ENCODE measurements at regions of chr2 and their contacts with region 1.

Region 1: GRCh38 chr2:68751397-68752339 is 17.1 kb downstream of the ARHGAP25 start:
- DNase-seq: peak; percentile 95
- ATAC-seq: peak; percentile 92
- H3K4me3 Mint-ChIP-seq: peak overlapping the region; percentile 27
- H3K27ac Mint-ChIP-seq: peak overlapping the region; percentile 77
- H3K4me1 Mint-ChIP-seq: peaks cover 88% of the 10 kb centered on the region
- H3K27me3 Mint-ChIP-seq: no peaks in the 10 kb centered on the region

Region 2: DNA sequence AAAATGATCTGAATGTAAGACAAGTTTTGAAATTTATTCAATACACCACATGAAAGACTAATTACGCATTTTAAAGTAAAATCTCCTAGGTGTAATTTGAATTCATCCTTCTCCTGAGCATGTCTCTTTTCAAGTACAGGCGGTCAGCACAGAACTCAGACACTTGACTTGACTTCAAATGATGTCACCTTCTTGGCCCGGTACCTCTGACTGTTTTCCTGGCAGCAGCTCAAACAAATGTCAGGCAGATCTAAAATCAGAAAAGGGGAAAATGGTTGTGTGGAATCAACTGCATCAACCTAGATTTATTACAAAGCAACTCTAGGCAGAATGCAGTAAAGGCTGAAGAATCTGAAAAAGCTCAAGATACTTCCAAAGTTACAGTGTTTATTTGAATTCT is 119.6 kb before region 1 on chr2:
- CTCF ChIA-PET with region 1: no interaction called
- DNase-seq: no peak
- ATAC-seq: no peak
- H3K4me3 Mint-ChIP-seq: no peak overlapping the region
- H3K27ac Mint-ChIP-seq: no peak overlapping the region
- H3K4me1 Mint-ChIP-seq: no peaks in the 10 kb centered on the region
- H3K27me3 Mint-ChIP-seq: peaks cover 38% of the 10 kb centered on the region

Region 3: DNA sequence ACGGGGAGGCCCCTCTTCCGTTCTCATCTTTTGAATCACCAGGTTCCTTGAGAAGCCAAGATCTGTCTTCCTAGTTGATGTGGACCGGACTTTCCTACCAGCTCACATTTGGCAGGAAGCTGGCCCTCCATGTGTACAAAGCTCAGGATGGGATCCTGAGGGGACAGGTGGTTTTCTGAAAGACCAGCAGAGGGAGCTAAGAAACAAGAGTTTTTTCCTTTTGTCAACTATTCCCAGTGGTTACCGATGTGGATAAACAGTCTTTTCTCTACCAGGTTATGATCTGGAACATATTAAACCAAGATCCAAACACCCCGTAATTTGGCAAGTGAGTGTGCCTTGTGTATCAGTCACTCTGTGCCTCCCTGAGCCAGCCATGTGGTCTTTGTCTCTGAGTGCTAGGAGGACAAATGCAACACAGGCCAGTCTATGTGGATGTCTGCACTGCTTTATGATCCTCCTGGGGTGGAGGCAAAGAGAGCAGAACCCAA is 42.2 kb before region 1 on chr2:
- CTCF ChIA-PET with region 1: interaction called, 16 read pairs
- DNase-seq: no peak
- ATAC-seq: peak; percentile 82
- H3K4me3 Mint-ChIP-seq: no peak overlapping the region
- H3K27ac Mint-ChIP-seq: peak overlapping the region; percentile 7
- H3K4me1 Mint-ChIP-seq: peaks cover 26% of the 10 kb centered on the region
- H3K27me3 Mint-ChIP-seq: peaks cover 2% of the 10 kb centered on the region

Region 4: DNA sequence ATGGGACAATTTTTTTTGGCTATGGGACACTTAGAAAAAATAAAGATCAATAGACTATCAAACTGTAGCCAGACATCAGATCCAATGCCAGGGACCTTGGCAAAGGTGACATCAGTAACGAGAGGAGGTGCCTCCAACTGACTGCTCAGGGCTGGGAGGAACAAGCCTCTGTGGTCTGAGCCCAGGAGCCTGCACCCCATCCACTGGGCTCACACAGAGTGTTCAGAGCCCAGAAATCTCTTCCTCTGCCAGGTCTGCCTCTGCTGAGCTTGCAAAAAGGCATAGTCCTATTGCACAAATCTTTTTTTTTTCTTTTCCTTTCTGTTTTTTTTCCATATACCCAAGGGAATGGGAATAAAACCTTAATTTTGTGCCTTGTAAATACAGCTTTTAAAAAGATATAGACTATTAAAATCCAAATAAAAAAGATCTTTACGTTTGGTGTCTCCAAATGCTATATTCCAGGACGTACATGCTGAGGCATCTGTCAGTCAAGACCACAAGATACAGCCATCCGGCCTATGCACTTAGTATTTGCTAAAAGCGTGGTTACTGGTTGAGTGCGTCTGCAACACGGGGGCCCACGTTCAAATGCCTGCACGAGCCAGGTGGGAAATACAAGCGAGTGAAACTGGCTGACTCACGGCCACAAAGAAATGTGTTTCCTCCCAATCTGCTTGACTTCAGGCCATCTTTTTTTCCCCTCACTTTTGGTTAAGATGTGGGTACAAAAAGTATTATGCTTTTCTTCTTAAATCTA is 24.9 kb before region 1 on chr2:
- CTCF ChIA-PET with region 1: interaction called, 22 read pairs
- DNase-seq: peak; percentile 95
- ATAC-seq: peak; percentile 97
- H3K4me3 Mint-ChIP-seq: peak overlapping the region; percentile 43
- H3K27ac Mint-ChIP-seq: peak overlapping the region; percentile 88
- H3K4me1 Mint-ChIP-seq: peaks cover 82% of the 10 kb centered on the region
- H3K27me3 Mint-ChIP-seq: no peaks in the 10 kb centered on the region

Region 5: GRCh38 chr2:68766376-68766845 is 14.7 kb after region 1 on chr2:
- CTCF ChIA-PET with region 1: interaction called, 93 read pairs
- DNase-seq: peak; percentile 89
- ATAC-seq: peak; percentile 71
- H3K4me3 Mint-ChIP-seq: peak overlapping the region; percentile 76
- H3K27ac Mint-ChIP-seq: peak overlapping the region; percentile 100
- H3K4me1 Mint-ChIP-seq: peaks cover 94% of the 10 kb centered on the region
- H3K27me3 Mint-ChIP-seq: no peaks in the 10 kb centered on the region

Region 6: DNA sequence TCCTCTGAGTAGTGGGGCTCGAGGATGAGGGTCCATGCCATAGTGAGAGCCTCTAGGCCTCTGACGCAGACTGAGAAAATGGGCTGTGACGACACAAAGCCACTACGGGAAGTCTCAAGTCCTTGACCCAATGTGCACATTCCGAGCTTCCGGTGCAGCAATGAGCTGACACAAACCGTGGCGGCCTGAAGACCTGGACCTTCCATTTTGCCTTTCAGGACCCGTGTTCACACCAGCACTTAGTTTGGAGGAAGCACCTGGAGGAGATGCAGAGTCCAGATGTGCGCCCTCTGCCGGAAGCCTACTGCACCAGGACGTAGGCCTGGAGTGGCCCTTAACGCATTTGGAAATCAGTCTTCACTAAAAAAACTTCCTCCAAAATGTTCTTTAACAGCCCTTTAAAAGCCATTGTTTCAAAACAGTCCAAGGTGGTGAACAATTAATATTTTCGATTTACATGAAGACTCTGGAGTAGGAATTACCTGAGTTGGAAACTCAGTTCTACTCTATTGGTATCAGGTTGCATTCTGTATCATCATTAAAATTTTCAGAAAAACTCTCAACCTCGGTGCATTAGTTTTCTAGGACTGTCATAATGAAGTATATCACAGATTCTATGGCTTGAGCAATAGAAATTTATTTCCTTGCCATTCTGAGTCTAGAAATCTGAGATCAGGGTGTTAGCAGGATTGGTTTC is 85.6 kb after region 1 on chr2:
- CTCF ChIA-PET with region 1: interaction called, 20 read pairs
- DNase-seq: peak; percentile 77
- ATAC-seq: peak; percentile 64
- H3K4me3 Mint-ChIP-seq: no peak overlapping the region
- H3K27ac Mint-ChIP-seq: peak overlapping the region; percentile 83
- H3K4me1 Mint-ChIP-seq: peaks cover 36% of the 10 kb centered on the region
- H3K27me3 Mint-ChIP-seq: no peaks in the 10 kb centered on the region

Region 7: DNA sequence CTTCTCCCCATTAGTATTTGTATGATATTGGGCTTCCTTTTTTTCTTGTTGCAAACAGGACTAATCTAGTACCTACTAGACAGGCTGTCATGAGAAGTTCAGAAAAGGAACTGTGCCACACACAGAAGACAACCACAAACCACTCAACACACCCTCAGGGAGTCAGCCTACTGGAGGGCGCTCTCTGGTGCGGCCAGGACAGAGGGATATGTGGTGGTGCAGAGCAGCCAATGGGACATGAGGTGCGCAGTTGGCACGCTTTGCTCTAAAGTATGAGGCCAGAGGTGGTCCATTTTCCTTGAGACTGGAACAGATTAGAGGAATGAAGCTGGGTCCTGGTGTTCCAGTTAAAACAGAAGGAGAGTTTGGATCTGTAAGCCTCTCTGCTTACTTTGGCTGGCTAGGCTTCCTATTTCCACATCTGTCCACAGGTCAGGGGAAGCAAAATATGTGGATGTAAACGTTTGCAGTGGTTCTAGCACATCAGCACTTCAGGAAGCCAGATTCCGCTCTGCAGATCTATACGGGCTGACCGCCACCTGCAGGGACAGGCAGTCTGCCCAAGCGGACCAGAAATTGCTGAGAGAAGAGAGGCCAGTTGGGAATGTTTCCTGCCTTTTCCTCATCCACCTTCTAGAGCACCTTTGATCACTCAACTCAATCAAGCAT is 521.3 kb after region 1 on chr2:
- CTCF ChIA-PET with region 1: no interaction called
- DNase-seq: no peak
- ATAC-seq: no peak
- H3K4me3 Mint-ChIP-seq: no peak overlapping the region
- H3K27ac Mint-ChIP-seq: no peak overlapping the region
- H3K4me1 Mint-ChIP-seq: no peaks in the 10 kb centered on the region
- H3K27me3 Mint-ChIP-seq: peaks cover 55% of the 10 kb centered on the region